ENCODE measurements at regions of chr9 and their contacts with region 1.

Region 1: DNA sequence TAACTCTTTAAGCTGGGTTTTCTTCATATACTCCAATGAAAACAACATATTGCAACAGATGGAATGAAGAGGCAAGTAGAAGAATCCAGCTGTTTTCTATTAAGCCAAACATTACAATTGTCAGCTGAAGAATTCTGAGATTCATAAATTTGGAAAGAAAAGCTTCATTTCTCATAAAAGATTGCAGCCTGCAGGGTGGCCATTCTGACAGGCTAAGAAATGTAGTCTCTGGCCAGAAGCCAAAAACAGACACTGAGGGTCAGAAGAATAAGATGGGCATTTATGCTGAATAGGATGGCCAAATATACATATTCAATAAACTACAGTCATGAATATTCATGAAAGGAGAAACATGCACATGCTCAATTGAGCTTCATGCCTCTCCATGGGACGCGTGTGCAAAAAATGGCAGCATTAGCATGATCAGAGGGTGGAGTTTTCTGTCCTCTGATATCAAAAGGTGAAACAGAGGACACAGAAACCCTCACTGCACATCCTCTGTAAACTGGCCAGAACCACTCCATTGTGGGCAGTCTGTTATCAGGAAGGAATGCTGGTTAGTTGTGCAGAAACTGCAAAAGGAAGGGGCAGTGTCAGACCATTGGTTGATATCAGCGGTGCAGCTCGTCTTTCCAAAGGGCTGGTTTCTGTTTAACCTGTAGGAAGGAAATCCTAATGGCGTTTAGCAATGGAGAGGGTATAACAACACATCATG is 50.2 kb downstream of the FXN start:
- DNase-seq: no peak
- ATAC-seq: no peak
- H3K4me3 ChIP-seq: no peak overlapping the region
- H3K27ac ChIP-seq: no peak overlapping the region
- H3K4me1 ChIP-seq: no peaks in the 10 kb centered on the region
- H3K27me3 ChIP-seq: no peaks in the 10 kb centered on the region
- CTCF ChIP-seq: no peak
- EP300 ChIP-seq: no peak
- POLR2A ChIP-seq: no peak
- RAD21 ChIP-seq: no peak

Region 2: DNA sequence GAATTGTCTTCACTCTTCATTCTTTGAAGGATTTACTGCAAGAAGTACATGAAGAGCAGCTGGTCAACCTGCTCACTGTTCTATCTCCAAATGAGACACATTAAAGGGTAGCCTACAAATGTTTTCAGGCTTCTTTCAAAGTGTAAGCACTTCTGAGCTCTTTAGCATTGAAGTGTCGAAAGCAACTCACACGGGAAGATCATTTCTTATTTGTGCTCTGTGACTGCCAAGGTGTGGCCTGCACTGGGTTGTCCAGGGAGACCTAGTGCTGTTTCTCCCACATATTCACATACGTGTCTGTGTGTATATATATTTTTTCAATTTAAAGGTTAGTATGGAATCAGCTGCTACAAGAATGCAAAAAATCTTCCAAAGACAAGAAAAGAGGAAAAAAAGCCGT is 12.6 kb before region 1 on chr9:
- CTCF ChIA-PET with region 1: interaction called, 5 read pairs
- POLR2A ChIA-PET with region 1: no interaction called
- RAD21 ChIA-PET with region 1: no interaction called
- SMC1A ChIA-PET with region 1: interaction called, 15 read pairs
- in situ Hi-C with region 1: no loop called
- intact Hi-C with region 1: no loop called
- DNase-seq: no peak
- ATAC-seq: no peak
- H3K4me3 ChIP-seq: no peak overlapping the region
- H3K27ac ChIP-seq: no peak overlapping the region
- H3K4me1 ChIP-seq: no peaks in the 10 kb centered on the region
- H3K27me3 ChIP-seq: no peaks in the 10 kb centered on the region
- CTCF ChIP-seq: no peak
- EP300 ChIP-seq: no peak
- POLR2A ChIP-seq: no peak
- RAD21 ChIP-seq: no peak

Region 3: GRCh38 chr9:69265891-69266290 is 180.2 kb after region 1 on chr9:
- CTCF ChIA-PET with region 1: no interaction called
- POLR2A ChIA-PET with region 1: no interaction called
- RAD21 ChIA-PET with region 1: no interaction called
- SMC1A ChIA-PET with region 1: no interaction called
- in situ Hi-C with region 1: no loop called
- intact Hi-C with region 1: no loop called
- DNase-seq: no peak
- ATAC-seq: no peak
- H3K4me3 ChIP-seq: no peak overlapping the region
- H3K27ac ChIP-seq: no peak overlapping the region
- H3K4me1 ChIP-seq: no peaks in the 10 kb centered on the region
- H3K27me3 ChIP-seq: no peaks in the 10 kb centered on the region; a peak in 1 of 4 replicates
- CTCF ChIP-seq: no peak
- EP300 ChIP-seq: no peak
- POLR2A ChIP-seq: no peak
- RAD21 ChIP-seq: no peak

Measured in GM12878 (cell line).